ENCODE measurements at regions of chr1 and their contacts with region 1.

Region 1: GRCh38 chr1:25608488-25609178 is 8.0 kb upstream of the MAN1C1 start:
- DNase-seq: peak; percentile 80
- CTCF ChIP-seq: peak; percentile 77

Region 2: GRCh38 chr1:25217598-25218232 is 390.9 kb before region 1 on chr1:
- CTCF ChIA-PET with region 1: no interaction called
- POLR2A ChIA-PET with region 1: no interaction called
- DNase-seq: no peak
- CTCF ChIP-seq: no peak

Region 3: DNA sequence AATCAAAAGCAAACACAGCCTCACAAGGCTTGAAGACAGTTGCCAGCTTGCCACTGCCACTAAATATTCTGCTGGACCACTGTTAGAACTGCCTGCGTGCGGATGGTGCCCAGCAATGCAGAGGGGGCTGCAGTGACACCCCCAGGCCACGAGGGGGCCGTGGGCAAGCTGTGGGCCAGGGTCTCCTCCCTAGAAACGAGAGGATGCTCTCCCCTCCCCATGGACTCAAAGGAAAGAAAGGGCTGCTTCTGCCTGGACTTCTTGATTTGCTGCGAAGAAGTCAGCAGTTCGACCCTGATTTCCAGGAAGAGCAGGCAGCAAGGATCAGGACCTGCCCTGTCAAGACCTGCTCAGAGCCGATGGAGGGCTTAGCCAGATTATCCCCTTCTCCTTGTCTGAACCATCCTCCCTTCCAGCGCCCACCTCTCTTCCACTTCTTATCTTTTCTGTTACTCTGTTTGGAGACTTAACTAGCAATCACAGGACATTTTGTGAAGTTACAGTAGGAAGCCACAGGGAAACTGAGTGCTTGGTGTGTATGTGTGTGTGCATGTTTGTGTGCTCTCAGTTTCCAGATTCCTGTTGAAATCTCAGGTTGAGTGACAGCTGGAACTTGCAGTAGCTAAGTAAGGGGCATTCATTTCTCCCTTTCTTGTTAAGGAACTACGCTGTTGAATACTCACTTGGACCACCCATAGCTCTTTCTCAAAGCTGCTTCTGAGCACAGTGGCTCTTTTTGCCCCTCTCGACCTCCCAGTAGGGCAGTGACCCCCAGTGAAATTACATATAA is 10.7 kb after region 1 on chr1:
- CTCF ChIA-PET with region 1: interaction called, 16 read pairs
- POLR2A ChIA-PET with region 1: no interaction called
- DNase-seq: no peak
- CTCF ChIP-seq: peak; percentile 68

Region 4: DNA sequence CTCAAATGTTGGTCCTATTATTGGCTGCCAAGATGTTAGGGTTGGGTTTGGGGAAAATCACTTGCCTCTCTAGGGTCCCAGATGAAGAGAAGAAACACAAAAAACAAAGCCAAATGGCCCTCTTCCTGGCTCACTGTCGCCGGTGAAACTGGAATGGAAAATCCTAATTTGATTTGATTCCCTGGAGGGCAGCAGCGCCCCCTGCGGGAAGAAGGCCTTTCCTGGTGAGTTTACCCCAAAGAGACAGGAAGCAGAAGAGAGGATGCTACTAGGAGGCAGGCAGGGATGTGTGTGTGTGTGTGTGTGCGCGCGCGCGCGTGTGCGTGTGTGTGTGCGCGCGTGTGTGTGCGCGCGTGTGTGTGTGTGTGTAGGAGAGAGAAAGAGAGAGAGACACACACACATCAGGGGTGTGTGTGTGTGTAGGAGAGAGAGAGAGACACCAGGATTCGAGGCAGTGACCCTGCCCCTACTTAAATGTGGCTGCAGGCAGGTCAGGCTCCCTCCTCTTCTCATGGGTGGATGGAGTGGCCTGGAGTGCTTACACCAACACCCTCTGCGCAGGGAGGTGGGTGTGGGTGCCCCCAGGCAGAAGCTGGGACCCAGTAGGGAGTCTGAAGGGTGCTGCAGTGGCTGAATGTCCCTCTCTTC is 188.3 kb after region 1 on chr1:
- CTCF ChIA-PET with region 1: interaction called, 13 read pairs
- POLR2A ChIA-PET with region 1: no interaction called
- DNase-seq: peak; percentile 71
- CTCF ChIP-seq: peak; percentile 87

Region 5: GRCh38 chr1:25810341-25811299 is 202.0 kb after region 1 on chr1:
- CTCF ChIA-PET with region 1: interaction called, 21 read pairs
- POLR2A ChIA-PET with region 1: no interaction called
- DNase-seq: peak; percentile 82
- CTCF ChIP-seq: peak; percentile 99

Measured in GM10248 (cell line).